ENCODE measurements at regions of chr10 and their contacts with region 1.

Region 1: GRCh38 chr10:86710987-86711512 is 42.7 kb downstream of the LDB3 start:
- DNase-seq: no peak
- H3K4me3 ChIP-seq: peak overlapping the region; percentile 72 to 76
- H3K27ac ChIP-seq: peak overlapping the region; percentile 96
- H3K4me1 ChIP-seq: peaks cover 15% of the 10 kb centered on the region
- H3K27me3 ChIP-seq: no peaks in the 10 kb centered on the region
- CTCF ChIP-seq: peak; percentile 57 to 90 (median 76)
- POLR2A ChIP-seq: peak in 1 of 2 donors; percentile 58

Region 2: DNA sequence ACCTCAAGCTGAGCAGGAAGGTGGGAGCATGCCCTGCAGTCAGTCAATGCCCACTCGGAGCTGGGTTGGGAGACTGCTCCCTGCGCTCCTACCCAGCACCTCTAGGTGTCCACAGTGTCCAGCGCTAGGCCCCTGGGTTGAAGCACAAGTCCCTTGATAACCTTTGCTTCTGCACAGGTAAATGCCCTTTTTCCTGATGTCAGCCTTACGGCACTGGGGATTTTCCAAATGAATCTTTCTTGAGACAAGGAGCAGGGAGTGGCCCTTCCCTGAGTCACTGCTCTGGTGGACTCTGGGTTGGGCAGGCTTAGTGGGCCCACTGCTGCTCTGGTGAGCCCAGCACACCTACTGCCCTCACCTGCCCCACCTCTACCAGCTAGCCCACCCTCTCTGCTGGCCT is 118.6 kb before region 1 on chr10:
- intact Hi-C with region 1: no loop called
- DNase-seq: no peak
- H3K4me3 ChIP-seq: no peak overlapping the region
- H3K27ac ChIP-seq: no peak overlapping the region
- H3K4me1 ChIP-seq: no peaks in the 10 kb centered on the region
- H3K27me3 ChIP-seq: no peaks in the 10 kb centered on the region
- CTCF ChIP-seq: no peak
- POLR2A ChIP-seq: no peak

Region 3: GRCh38 chr10:86755740-86756510 is 44.9 kb after region 1 on chr10:
- intact Hi-C with region 1: loop called (anchors 5 kb)
- DNase-seq: peak in 1 of 2 donors; percentile 89
- H3K4me3 ChIP-seq: peak overlapping the region; percentile 76 to 83
- H3K27ac ChIP-seq: peak overlapping the region; percentile 94
- H3K4me1 ChIP-seq: peaks cover 21% of the 10 kb centered on the region
- H3K27me3 ChIP-seq: no peaks in the 10 kb centered on the region
- CTCF ChIP-seq: no peak
- POLR2A ChIP-seq: peak in 1 of 2 donors; percentile 74